Activated T-helper 1 cell treated with anti-CD3 and anti-CD28 coated beads, Interleukin-12 subunit alpha, Interleukin-12 subunit beta, Interleukin-2, Interleukin-4 antibody, amounts not matched to agents 30 ng/mL and 10 ng/mL and 1 ng/mL, durations not matched to agents 14 hours and 24 hours and 36 hours (primary cell): ENCODE measurements at regions of chrX and their contacts with region 1.

Region 1: DNA sequence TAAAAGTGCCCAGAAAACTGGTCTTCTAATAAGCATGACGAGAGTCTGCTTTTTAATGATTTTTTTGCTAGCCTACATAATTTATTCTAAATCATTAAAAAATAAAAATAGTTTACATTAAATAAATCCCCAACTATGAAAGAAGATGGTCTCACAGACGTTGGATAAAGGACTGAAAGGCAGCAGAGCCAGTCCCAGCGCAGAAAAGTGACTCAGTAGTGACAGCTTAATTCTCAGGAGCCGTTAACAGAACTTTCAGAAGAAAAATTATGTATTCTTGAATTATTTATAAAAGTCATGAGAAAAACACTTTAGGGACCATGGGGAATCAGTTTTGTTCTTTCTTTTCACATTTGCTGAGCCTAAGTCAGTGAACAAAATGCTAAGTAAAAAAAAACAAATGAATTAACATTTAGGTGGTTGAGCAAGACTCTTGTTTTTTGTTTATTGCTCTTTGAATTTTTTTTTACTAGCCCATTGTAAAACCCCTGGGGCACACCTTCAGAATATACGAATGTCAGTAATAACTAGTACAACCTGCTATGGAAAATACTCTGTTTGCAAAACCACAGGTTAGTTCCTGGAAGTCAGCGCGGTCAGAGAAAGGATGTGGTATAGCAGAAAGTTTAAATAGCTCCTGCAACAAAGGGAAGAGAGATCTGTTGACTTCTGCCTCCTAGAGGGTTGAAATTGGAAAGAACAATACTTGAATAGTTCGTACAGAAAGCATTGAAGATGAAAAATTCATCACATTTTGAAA is 50.4 kb upstream of the CCDC160 start:
- DNase-seq: peak; percentile 73
- H3K4me3 Mint-ChIP-seq: peak overlapping the region; percentile 88
- H3K27ac Mint-ChIP-seq: peak overlapping the region; percentile 82
- H3K4me1 Mint-ChIP-seq: peaks cover 31% of the 10 kb centered on the region
- H3K27me3 Mint-ChIP-seq: peaks cover 4% of the 10 kb centered on the region

Region 2: DNA sequence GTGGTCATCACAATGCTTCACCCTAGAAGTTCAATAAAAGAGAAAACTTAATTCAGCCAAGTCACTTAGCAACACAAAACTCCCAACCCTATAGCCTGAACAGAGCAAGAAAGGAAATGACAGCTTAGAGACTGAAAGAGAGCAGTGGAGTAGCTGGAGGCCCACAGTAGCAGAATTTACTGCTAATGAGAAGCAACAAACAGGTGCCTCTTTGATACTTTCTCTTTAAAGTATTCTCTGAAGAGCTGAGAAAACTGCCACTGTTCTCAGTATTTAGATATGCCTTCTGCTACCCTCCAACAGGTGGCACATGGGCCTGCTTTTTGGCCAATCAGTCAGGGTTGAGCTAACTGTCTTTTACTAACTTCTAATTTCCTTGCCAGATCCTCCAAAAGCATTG is 441.2 kb before region 1 on chrX:
- intact Hi-C with region 1: no loop called
- DNase-seq: no peak
- H3K4me3 Mint-ChIP-seq: no peak overlapping the region
- H3K27ac Mint-ChIP-seq: no peak overlapping the region
- H3K4me1 Mint-ChIP-seq: peaks cover 9% of the 10 kb centered on the region
- H3K27me3 Mint-ChIP-seq: no peaks in the 10 kb centered on the region

Region 3: GRCh38 chrX:133921764-133922389 is 264.7 kb before region 1 on chrX:
- intact Hi-C with region 1: loop called (anchors 5 kb)
- DNase-seq: peak; percentile 1
- H3K4me3 Mint-ChIP-seq: no peak overlapping the region
- H3K27ac Mint-ChIP-seq: no peak overlapping the region
- H3K4me1 Mint-ChIP-seq: peaks cover 10% of the 10 kb centered on the region
- H3K27me3 Mint-ChIP-seq: peaks cover 7% of the 10 kb centered on the region

Region 4: GRCh38 chrX:134158821-134159512 is 27.6 kb before region 1 on chrX:
- intact Hi-C with region 1: loop called (anchors 1 kb)
- DNase-seq: no peak
- H3K4me3 Mint-ChIP-seq: no peak overlapping the region
- H3K27ac Mint-ChIP-seq: peak overlapping the region; percentile 78
- H3K4me1 Mint-ChIP-seq: peaks cover 24% of the 10 kb centered on the region
- H3K27me3 Mint-ChIP-seq: no peaks in the 10 kb centered on the region

Region 5: GRCh38 chrX:134244035-134244434 is 57.5 kb after region 1 on chrX:
- intact Hi-C with region 1: loop called (anchors 5 kb)
- DNase-seq: no peak
- H3K4me3 Mint-ChIP-seq: no peak overlapping the region
- H3K27ac Mint-ChIP-seq: no peak overlapping the region
- H3K4me1 Mint-ChIP-seq: peaks cover 25% of the 10 kb centered on the region
- H3K27me3 Mint-ChIP-seq: peaks cover 4% of the 10 kb centered on the region

Region 6: GRCh38 chrX:134460005-134460861 is 273.7 kb after region 1 on chrX and contains the start of gene HPRT1:
- intact Hi-C with region 1: loop called (anchors 1 kb)
- DNase-seq: peak; percentile 76
- H3K4me3 Mint-ChIP-seq: peak within 1 kb of the TSS; percentile 90
- H3K27ac Mint-ChIP-seq: peak within 1 kb of the TSS; percentile 91
- H3K4me1 Mint-ChIP-seq: peaks cover 19% of the 10 kb centered on the region
- H3K27me3 Mint-ChIP-seq: no peaks in the 10 kb centered on the region
- total RNA-seq, gene HPRT1: 106 and 113 TPM in 2 replicates

Region 7: DNA sequence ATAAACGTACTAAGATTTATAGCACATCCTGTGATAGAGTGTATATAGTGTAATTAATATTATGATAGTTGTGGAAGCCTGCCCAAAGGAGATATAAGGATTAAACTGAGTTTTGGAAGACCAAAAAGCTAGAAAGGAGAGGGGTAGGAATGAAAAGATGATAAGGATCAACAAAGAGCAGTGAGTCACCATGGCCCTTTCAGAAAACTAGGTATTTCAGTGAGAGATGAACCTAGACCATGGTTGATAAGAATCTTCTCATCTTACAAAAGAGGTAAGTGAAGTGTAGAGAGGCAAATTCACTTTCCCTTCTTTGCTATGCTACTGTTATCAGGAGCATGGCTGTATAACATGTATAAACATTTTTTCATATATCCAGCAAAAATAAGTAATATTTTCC is 605.5 kb after region 1 on chrX:
- intact Hi-C with region 1: no loop called
- DNase-seq: no peak
- H3K4me3 Mint-ChIP-seq: no peak overlapping the region
- H3K27ac Mint-ChIP-seq: peak overlapping the region; percentile 59
- H3K4me1 Mint-ChIP-seq: peaks cover 27% of the 10 kb centered on the region
- H3K27me3 Mint-ChIP-seq: no peaks in the 10 kb centered on the region